Motor neuron (in vitro differentiated cells): ENCODE measurements at regions of chr1 and their contacts with region 1.

Region 1: GRCh38 chr1:48061162-48062136 is 64.3 kb upstream of the TRABD2B start:
- ATAC-seq: peak; percentile 50 to 86 (median 80)
- H3K4me3 ChIP-seq: no peak overlapping the region
- H3K27ac ChIP-seq: no peak overlapping the region
- H3K4me1 ChIP-seq: peaks cover 0 to 4% of the 10 kb centered on the region in 2 donors

Region 2: DNA sequence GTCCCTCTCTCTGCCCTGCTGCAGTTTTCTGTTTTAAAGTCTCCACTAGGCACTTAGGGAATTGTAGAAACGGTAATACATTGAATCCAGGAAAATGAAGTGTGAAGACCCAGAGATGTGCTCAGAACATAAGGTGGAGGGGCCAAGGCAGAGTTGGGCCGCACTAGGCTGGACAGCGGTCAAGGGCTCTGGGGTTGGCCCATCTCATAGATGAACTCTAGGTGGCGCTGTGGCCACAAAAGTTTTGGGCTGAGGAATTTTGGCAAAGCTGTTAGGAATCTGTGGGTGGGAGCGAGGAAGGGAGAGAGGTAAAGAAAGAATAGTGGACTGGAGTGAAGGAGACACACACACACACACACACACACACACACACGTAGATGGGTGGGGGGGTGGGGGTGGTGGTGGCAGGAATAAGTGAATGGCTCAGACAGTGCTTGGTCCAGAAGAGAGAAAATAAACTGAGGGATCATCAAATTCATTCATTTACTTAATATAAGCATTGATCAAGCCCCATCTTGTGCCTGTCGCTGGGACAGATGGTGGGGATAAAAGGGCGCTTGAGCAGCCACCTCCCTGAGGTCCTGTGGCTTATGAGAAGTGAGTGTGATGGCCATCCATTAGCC is 322.8 kb before region 1 on chr1:
- in situ Hi-C with region 1: loop called in 4 of 9 experiments (anchors 10 to 25 kb)
- ATAC-seq: peak; percentile 66 to 98 (median 80)
- H3K4me3 ChIP-seq: no peak overlapping the region
- H3K27ac ChIP-seq: no peak overlapping the region
- H3K4me1 ChIP-seq: no peaks in the 10 kb centered on the region

Region 3: GRCh38 chr1:47755101-47755990 is 306.1 kb before region 1 on chr1:
- in situ Hi-C with region 1: loop called in 1 of 9 experiments (anchors 25 kb)
- ATAC-seq: peak in 1 of 8 experiments; percentile 41
- H3K4me3 ChIP-seq: no peak overlapping the region
- H3K27ac ChIP-seq: no peak overlapping the region
- H3K4me1 ChIP-seq: peaks cover 7 to 8% of the 10 kb centered on the region in 2 donors

Region 4: DNA sequence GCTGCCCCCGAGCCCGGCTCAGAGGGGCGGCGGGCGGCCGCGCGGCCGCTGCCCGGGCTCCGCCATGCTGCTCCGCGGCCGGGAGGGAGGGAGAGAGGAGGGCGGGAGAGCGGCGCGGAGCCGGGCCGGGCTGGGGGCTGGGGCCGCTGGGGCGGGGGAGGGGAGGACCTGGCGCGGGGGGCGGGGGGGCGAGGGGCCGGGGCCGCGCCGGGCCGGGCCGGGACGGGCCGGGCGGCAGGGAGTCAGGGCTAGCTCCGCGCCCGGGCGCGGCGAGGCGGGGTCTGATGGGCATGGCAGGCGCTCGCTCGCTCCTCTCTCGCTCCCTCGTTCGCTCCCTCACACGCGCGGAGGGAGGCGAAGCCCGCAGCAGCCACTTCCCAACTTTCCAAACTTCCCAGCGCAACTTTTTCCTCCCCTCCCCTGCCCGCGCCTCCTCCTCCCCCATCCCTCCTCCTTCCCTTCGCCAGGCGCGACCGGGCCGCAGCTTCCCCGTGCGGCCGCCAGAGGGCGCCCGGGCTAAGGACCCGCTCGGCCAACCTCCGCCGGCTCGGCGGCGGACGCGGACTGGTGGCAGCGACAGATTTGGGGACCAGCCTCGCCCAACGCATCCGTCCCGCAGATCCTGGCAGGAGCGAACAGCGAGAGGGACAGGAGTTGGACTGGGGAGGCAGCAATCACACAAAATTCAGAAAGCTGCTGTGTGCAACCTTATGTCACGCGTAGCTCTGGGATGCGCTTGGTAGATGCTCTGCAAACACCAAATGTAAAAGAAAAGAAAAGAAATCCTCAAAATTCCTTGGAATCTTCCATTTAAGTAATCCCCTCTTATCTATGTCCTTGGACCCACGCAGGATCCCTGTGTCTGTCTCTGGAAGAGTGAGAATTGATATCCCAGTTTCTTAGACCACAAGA is 63.9 kb before region 1 on chr1 and contains the start of gene TRABD2B:
- in situ Hi-C with region 1: loop called in 1 of 9 experiments (anchors 10 kb)
- ATAC-seq: peak; percentile 63 to 88 (median 84)
- H3K4me3 ChIP-seq: peak within 1 kb of the TSS; percentile 41 to 57 (median 47)
- H3K27ac ChIP-seq: no peak within 1 kb of the TSS
- H3K4me1 ChIP-seq: peaks cover 7 to 14% of the 10 kb centered on the region in 2 donors
- total RNA-seq, gene TRABD2B: 0.11 to 1.1 (median 0.42) TPM